ENCODE measurements at regions of chr19 and their contacts with region 1.

Region 1: GRCh38 chr19:44570984-44571684 is 41.7 kb upstream of the CEACAM20 start:
- DNase-seq: peak; percentile 28
- H3K4me3 Mint-ChIP-seq: no peak overlapping the region
- H3K27ac Mint-ChIP-seq: no peak overlapping the region
- H3K4me1 Mint-ChIP-seq: no peaks in the 10 kb centered on the region
- H3K27me3 Mint-ChIP-seq: no peaks in the 10 kb centered on the region

Region 2: DNA sequence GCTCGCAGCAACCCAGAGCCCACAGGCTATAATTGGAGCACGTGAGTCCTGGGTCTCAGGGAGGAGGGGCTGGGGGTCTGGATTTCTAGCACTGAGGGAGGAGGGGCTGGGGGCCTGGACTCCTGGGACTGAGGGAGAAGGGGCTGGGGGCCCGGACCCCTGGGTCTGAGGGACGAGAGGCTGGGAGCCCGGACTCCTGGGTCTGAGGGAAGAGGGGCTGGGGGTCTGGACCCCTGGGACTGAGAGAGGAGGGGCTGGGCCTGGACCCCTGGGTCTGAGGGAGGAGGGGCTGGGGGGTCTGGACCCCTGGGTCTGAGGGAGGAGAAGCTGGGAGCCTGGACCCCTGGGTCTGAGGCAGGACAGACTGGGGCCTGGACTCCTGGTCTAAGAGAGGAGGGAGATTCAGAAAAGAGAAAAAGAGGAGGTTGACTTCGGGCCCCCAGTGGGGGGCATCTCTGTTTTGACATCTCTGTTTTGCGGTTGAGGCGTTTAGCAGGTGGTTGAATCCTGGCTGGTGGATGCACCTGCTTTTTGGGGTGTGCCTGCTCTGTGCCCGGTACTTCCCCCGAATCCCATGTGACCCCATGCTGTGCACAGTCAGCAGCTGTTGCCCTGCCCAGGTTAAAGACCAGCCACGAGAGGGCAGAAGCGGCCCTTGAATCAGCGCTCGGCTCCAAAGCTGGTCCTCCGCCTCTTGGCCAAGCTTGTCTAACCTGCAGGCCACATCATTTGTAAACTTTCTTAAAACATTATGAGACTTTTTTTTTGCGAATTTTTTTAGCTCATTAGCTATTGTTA is 83.0 kb after region 1 on chr19:
- intact Hi-C with region 1: loop called (anchors 1 kb)
- DNase-seq: peak; percentile 60
- H3K4me3 Mint-ChIP-seq: no peak overlapping the region
- H3K27ac Mint-ChIP-seq: no peak overlapping the region
- H3K4me1 Mint-ChIP-seq: peaks cover 8% of the 10 kb centered on the region
- H3K27me3 Mint-ChIP-seq: no peaks in the 10 kb centered on the region

Region 3: GRCh38 chr19:44753932-44754749 is 183.0 kb after region 1 on chr19:
- intact Hi-C with region 1: no loop called
- DNase-seq: peak; percentile 66
- H3K4me3 Mint-ChIP-seq: peak overlapping the region; percentile 93
- H3K27ac Mint-ChIP-seq: peak overlapping the region; percentile 93
- H3K4me1 Mint-ChIP-seq: peaks cover 52% of the 10 kb centered on the region
- H3K27me3 Mint-ChIP-seq: no peaks in the 10 kb centered on the region